HEK293 (cell line): ENCODE measurements at regions of chr18 and their contacts with region 1.

Region 1: DNA sequence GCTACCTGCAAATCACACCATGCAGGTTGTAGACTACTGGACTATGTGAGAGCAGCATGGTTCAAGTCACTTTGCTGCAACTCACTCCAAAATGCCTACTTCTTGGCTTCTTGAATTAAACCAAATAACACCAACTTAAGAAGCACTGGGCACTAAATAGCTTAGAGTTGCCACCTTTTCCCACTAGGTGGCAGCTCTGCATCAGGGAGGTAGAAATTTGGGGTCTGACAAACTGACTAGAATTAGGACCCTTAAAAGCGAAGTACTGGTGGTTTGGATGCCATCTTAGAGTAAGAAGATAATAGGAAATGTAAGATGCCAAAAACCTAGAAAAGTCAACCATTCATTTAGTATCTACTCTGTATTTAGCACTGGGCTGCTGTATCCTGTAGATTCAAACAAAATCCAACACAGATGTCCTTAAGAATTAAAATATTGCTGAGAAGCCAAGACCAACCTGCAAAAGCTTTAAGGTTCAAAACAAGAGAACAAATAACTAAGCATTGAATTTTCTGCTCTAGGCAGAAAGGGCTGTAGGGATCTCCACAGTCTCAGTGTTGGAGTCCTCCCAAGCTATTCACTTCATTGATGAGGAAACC is 65.5 kb downstream of the CCBE1 start:
- H3K4me3 ChIP-seq: no peak overlapping the region
- H3K27ac ChIP-seq: no peak overlapping the region
- H3K4me1 ChIP-seq: 0 out of 2 replicates have a peak, but pooled peaks cover 4% of the 10 kb centered on the region
- CTCF ChIP-seq: peak; percentile 51; the same call in 1 of the 2 replicates

Region 2: DNA sequence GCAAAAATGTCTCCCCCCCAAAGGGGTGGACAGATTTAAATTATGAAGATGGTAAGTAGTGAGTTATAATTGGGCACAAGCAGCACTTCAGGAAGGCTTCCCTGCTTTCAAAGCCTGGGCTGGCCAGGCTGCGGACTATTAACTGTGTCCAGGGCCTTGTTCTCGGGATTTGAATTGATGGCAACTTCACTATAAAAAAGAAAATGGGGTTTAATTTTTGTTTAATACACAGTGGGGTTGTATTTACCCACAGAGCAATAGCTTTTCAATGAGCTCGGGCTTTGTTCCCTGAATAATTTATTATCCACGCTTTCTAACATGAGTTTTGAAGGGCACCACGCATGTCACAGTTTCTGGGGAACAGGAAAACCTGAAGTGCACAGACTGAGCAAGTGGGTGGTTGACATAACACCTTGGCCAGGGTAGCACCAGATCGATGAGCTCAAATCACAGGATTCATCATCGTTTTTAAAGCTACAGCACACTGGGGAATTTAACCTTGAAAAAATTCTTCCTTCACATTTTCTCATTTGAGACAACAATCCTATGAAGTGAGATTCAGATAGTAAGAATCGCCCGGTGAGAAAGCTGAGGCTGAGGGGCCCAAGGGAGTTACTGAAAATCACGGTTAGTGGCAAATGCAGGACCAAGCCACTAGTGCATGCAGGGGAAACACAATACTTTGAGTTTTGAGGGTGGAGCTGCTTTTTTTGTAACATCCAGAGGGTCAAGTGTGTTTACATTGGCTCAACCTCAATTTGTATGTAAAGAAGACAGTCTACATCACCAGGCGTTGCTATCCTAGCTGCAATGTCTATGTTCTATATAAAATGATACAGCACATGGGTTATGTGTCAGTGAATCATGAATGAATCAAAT is 243.8 kb before region 1 on chr18:
- CTCF ChIA-PET with region 1: no interaction called
- POLR2A ChIA-PET with region 1: no interaction called
- H3K4me3 ChIP-seq: no peak overlapping the region
- H3K27ac ChIP-seq: no peak overlapping the region; the same call in 1 of the 2 replicates
- H3K4me1 ChIP-seq: peaks cover 13% of the 10 kb centered on the region
- CTCF ChIP-seq: no peak

Region 3: GRCh38 chr18:59432803-59433597 is 198.7 kb before region 1 on chr18:
- CTCF ChIA-PET with region 1: no interaction called
- POLR2A ChIA-PET with region 1: no interaction called
- H3K4me3 ChIP-seq: no peak overlapping the region
- H3K27ac ChIP-seq: no peak overlapping the region
- H3K4me1 ChIP-seq: no peaks in the 10 kb centered on the region
- CTCF ChIP-seq: no peak

Region 4: DNA sequence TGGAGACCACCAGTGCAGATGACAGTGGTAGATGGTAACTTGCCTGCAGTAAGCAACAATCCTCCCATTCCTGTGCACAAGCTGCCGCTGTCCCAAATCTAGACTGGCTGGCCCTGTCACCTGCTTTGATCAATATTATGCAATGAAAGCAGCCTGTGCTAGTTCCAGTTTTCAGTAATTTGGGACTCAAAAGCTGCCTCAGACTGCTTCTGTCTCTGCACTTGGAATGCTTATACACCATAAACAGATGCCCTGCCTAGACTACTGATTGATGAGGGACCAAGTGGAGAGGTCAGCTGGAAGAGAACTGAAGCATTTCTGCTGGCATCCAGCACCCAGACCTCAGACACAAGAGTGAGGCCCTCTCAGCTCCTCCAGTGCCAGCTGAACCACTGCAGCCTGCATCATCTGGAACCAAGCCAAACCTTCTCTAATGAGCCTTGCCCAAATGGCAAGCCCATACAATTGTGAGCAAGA is 40.6 kb after region 1 on chr18:
- CTCF ChIA-PET with region 1: interaction called, 10 read pairs
- POLR2A ChIA-PET with region 1: no interaction called
- H3K4me3 ChIP-seq: no peak overlapping the region
- H3K27ac ChIP-seq: no peak overlapping the region
- H3K4me1 ChIP-seq: peaks cover 14% of the 10 kb centered on the region; the same call in 1 of the 2 replicates
- CTCF ChIP-seq: no peak

Region 5: GRCh38 chr18:59690996-59691395 is 59.3 kb after region 1 on chr18:
- CTCF ChIA-PET with region 1: interaction called, 13 read pairs
- POLR2A ChIA-PET with region 1: interaction called, 3 read pairs
- H3K4me3 ChIP-seq: no peak overlapping the region
- H3K27ac ChIP-seq: no peak overlapping the region
- H3K4me1 ChIP-seq: 0 out of 2 replicates have a peak, but pooled peaks cover under 1% of the 10 kb centered on the region
- CTCF ChIP-seq: no peak

Region 6: DNA sequence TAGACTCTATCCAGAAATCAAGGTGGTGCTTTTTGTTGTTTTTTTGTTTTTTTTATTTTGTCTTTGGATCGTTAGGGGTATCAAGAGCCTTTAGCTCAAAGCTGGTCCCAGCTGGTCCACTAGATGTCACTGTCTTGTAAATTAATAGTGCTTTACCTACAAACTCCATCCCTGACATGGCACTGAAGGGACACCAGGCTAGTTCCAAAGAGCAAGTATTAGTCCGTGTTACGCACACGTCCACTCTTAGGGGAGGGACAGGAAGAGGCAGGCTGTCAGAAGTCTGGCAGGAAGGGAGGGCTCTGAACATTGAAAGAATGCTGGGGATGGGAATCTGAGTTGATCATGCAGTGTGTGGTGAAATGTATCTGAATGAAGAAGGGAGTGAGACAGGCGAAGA is 151.5 kb after region 1 on chr18:
- CTCF ChIA-PET with region 1: interaction called, 13 read pairs
- POLR2A ChIA-PET with region 1: no interaction called
- H3K4me3 ChIP-seq: no peak overlapping the region
- H3K27ac ChIP-seq: no peak overlapping the region
- H3K4me1 ChIP-seq: no peaks in the 10 kb centered on the region
- CTCF ChIP-seq: peak; percentile 74

Region 7: DNA sequence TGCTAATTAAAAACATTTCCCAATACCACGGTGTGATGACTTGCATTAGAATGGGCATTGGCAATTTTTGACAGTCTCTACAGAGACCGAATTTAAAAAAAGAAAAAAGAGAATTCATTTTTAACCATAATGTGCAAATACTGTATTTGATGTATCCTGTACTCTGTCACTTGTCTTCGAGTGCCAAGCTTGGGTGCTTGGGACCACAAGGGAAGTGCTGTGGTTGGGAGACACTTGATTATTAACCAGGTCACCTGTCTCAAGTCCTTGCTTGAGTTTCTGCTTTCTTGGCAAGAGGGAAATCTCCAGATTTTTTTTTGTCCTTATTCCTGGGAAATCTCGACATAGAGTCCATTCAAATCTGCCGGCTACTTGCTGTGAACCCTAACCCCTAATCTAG is 531.9 kb after region 1 on chr18:
- CTCF ChIA-PET with region 1: no interaction called
- POLR2A ChIA-PET with region 1: no interaction called
- H3K4me3 ChIP-seq: no peak overlapping the region
- H3K27ac ChIP-seq: no peak overlapping the region
- H3K4me1 ChIP-seq: no peaks in the 10 kb centered on the region
- CTCF ChIP-seq: no peak